ENCODE measurements at regions of chr17 and their contacts with region 1.

Region 1: GRCh38 chr17:30336369-30337171 is 2.7 kb upstream of the TMIGD1 start:
- DNase-seq: peak; percentile 14 to 83 (median 48)
- ATAC-seq: peak; percentile 43
- H3K4me3 ChIP-seq: no peak overlapping the region
- H3K4me3 Mint-ChIP-seq: peak overlapping the region; percentile 9
- H3K27ac ChIP-seq: no peak overlapping the region
- H3K27ac Mint-ChIP-seq: peak overlapping the region; percentile 38
- H3K4me1 ChIP-seq: peaks cover 18% of the 10 kb centered on the region
- H3K4me1 Mint-ChIP-seq: peaks cover 34% of the 10 kb centered on the region
- H3K27me3 ChIP-seq: no peaks in the 10 kb centered on the region
- H3K27me3 Mint-ChIP-seq: no peaks in the 10 kb centered on the region
- CTCF ChIP-seq: peak; percentile 97

Region 2: GRCh38 chr17:30104575-30105339 is 231.8 kb before region 1 on chr17:
- CTCF ChIA-PET with region 1: interaction called, 11 read pairs
- POLR2A ChIA-PET with region 1: interaction called, 12 read pairs
- intact Hi-C with region 1: loop called (anchors 1 to 2 kb)
- DNase-seq: peak; percentile 50 to 88 (median 60)
- ATAC-seq: peak; percentile 94
- H3K4me3 ChIP-seq: peak overlapping the region; percentile 47
- H3K4me3 Mint-ChIP-seq: peak overlapping the region; percentile 75
- H3K27ac ChIP-seq: no peak overlapping the region
- H3K27ac Mint-ChIP-seq: no peak overlapping the region
- H3K4me1 ChIP-seq: peaks cover 11% of the 10 kb centered on the region
- H3K4me1 Mint-ChIP-seq: peaks cover 4% of the 10 kb centered on the region
- H3K27me3 ChIP-seq: no peaks in the 10 kb centered on the region
- H3K27me3 Mint-ChIP-seq: peaks cover 7% of the 10 kb centered on the region
- CTCF ChIP-seq: peak; percentile 98

Region 3: DNA sequence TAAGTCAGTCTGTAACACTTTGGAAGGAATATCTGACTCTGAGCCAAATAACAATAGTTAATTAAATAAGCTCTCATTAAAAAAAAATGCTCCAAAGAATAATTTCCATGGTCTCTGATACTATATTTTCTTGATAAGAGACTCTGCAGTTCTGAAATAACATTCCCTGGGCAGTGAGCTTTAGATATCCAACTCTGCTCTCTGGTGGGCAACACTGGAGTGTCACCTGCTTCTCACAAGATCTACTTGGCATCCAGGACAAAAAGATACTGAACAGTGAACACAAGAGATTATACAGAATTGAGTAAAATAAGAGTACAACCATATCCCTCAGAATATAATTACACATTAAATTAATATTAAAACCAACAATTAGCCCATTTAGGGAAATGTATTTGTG is 58.5 kb before region 1 on chr17:
- CTCF ChIA-PET with region 1: interaction called, 14 read pairs
- POLR2A ChIA-PET with region 1: interaction called, 3 read pairs
- intact Hi-C with region 1: loop called in 1 of 2 experiments (anchors 5 kb)
- DNase-seq: peak in 3 of 14 experiments; percentile 12 to 43 (median 28)
- ATAC-seq: peak; percentile 52
- H3K4me3 ChIP-seq: no peak overlapping the region
- H3K4me3 Mint-ChIP-seq: no peak overlapping the region
- H3K27ac ChIP-seq: no peak overlapping the region
- H3K27ac Mint-ChIP-seq: no peak overlapping the region
- H3K4me1 ChIP-seq: no peaks in the 10 kb centered on the region
- H3K4me1 Mint-ChIP-seq: no peaks in the 10 kb centered on the region
- H3K27me3 ChIP-seq: no peaks in the 10 kb centered on the region
- H3K27me3 Mint-ChIP-seq: no peaks in the 10 kb centered on the region
- CTCF ChIP-seq: peak; percentile 19

Region 4: GRCh38 chr17:30299000-30299399 is 37.6 kb before region 1 on chr17:
- CTCF ChIA-PET with region 1: interaction called, 8 read pairs
- POLR2A ChIA-PET with region 1: interaction called, 3 read pairs
- intact Hi-C with region 1: loop called in 1 of 2 experiments (anchors 2 kb)
- DNase-seq: peak in 1 of 14 experiments; percentile 17
- ATAC-seq: no peak
- H3K4me3 ChIP-seq: no peak overlapping the region
- H3K4me3 Mint-ChIP-seq: no peak overlapping the region
- H3K27ac ChIP-seq: no peak overlapping the region
- H3K27ac Mint-ChIP-seq: no peak overlapping the region
- H3K4me1 ChIP-seq: no peaks in the 10 kb centered on the region
- H3K4me1 Mint-ChIP-seq: no peaks in the 10 kb centered on the region
- H3K27me3 ChIP-seq: no peaks in the 10 kb centered on the region
- H3K27me3 Mint-ChIP-seq: no peaks in the 10 kb centered on the region
- CTCF ChIP-seq: peak; percentile 61

Region 5: GRCh38 chr17:30378824-30379302 is 42.3 kb after region 1 on chr17 and contains the start of gene CPD:
- CTCF ChIA-PET with region 1: interaction called, 12 read pairs
- POLR2A ChIA-PET with region 1: interaction called, 6 read pairs
- intact Hi-C with region 1: loop called (anchors 2 to 5 kb)
- DNase-seq: peak; percentile 93 to 99 (median 97)
- ATAC-seq: peak; percentile 94
- H3K4me3 ChIP-seq: peak within 1 kb of the TSS; percentile 78
- H3K4me3 Mint-ChIP-seq: peak within 1 kb of the TSS; percentile 93
- H3K27ac ChIP-seq: peak within 1 kb of the TSS; percentile 82 to 88
- H3K27ac Mint-ChIP-seq: peak within 1 kb of the TSS; percentile 93
- H3K4me1 ChIP-seq: peaks cover 38% of the 10 kb centered on the region
- H3K4me1 Mint-ChIP-seq: peaks cover 65% of the 10 kb centered on the region
- H3K27me3 ChIP-seq: no peaks in the 10 kb centered on the region
- H3K27me3 Mint-ChIP-seq: no peaks in the 10 kb centered on the region
- CTCF ChIP-seq: no peak
- total RNA-seq, gene CPD: 26.2 to 30.7 TPM

Region 6: GRCh38 chr17:30395398-30396022 is 58.9 kb after region 1 on chr17:
- CTCF ChIA-PET with region 1: no interaction called
- POLR2A ChIA-PET with region 1: no interaction called
- intact Hi-C with region 1: no loop called
- DNase-seq: no peak
- ATAC-seq: no peak
- H3K4me3 ChIP-seq: no peak overlapping the region
- H3K4me3 Mint-ChIP-seq: no peak overlapping the region
- H3K27ac ChIP-seq: no peak overlapping the region
- H3K27ac Mint-ChIP-seq: no peak overlapping the region
- H3K4me1 ChIP-seq: no peaks in the 10 kb centered on the region
- H3K4me1 Mint-ChIP-seq: peaks cover 32% of the 10 kb centered on the region
- H3K27me3 ChIP-seq: no peaks in the 10 kb centered on the region
- H3K27me3 Mint-ChIP-seq: no peaks in the 10 kb centered on the region
- CTCF ChIP-seq: no peak

Region 7: DNA sequence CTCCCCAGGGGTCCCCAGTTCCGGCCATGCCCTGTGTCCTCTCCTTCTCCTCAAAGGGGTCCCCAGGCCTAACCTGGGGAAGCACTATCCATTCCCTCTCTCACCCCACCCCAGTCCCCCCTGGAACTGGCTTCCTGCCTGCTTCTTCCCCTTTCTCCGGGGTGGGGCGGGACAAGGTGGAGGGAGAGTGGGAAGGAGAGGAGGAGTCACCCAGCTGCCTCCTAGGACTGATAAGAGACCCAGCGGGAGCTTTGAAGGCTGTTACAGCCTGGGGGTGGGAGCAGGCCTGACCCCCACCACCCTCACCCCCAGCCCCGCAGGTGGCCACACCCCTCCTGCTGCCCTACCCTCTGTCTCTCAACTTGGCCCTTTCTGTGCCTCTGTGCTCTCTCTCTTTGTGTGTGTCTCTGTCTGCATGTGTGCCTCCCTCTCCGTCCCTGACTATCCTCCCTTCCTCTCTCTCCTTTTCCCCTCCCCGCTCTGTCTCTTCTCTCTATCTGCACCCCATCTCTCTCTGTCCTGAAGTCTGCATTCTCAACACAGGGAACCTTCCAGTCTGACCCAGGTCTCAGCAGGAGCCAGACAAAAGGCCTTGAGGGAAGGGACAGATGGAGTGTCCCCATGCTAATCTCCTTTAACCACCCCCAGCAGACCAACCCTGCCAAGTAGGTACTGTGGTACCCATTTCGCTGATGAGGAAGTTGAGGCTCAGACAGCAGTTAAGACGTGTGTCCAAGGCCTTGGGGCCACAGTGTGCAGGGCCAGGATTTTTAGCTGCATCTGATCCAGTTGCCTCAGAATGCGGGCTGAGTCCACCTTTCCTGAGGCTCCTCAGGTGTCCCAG is 1121.0 kb after region 1 on chr17:
- CTCF ChIA-PET with region 1: no interaction called
- POLR2A ChIA-PET with region 1: no interaction called
- intact Hi-C with region 1: no loop called
- DNase-seq: no peak
- ATAC-seq: no peak
- H3K4me3 ChIP-seq: no peak overlapping the region
- H3K4me3 Mint-ChIP-seq: no peak overlapping the region
- H3K27ac ChIP-seq: no peak overlapping the region
- H3K27ac Mint-ChIP-seq: no peak overlapping the region
- H3K4me1 ChIP-seq: no peaks in the 10 kb centered on the region
- H3K4me1 Mint-ChIP-seq: no peaks in the 10 kb centered on the region
- H3K27me3 ChIP-seq: no peaks in the 10 kb centered on the region
- H3K27me3 Mint-ChIP-seq: no peaks in the 10 kb centered on the region
- CTCF ChIP-seq: no peak